Aorta (tissue), 5 donors: ENCODE measurements at regions of chr1 and their contacts with region 1.

Region 1: DNA sequence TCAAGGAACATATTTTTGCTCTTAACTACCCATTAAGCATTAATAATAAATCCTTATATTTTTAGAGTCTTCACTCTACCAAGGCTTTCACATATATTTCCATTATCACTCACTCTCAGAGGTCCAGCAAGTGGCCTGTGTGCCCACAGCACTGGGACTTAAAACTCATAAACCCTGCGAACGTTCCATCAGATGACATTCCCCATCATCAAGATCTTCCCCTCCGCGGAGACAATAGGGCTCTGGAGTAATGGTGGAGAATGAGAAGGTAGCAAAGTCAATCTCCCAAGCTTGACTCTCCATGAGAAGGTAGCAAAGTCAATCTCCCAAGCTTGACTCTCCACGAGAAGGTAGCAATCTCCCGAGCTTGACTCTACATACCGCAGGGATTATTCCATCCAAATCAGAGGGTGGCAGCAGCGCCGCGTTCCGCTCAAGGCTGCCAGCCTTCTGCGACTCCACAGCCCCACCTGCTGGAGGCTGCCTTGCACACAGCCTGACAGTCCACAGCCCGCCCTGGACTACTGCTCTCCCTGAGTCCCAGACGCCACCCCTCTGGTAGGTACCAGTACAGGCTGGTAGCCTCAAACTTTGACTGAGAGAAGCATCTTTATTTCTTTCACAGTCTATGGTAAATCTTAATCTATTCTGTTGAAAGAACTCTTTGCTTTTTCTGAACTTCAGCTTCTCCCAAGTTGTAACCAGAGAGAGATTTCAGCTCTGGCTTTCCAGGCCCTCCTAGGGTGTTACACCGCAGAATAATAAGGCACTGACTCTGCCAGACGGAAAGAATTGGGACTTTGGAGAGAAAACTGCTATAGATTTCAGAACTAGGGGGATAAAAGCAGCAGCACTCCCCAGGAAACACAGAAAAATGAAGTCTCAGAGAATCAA is 26.4 kb upstream of the CTTNBP2NL start:
- DNase-seq: peak; percentile 89 to 97
- ATAC-seq: peak; percentile 97
- H3K4me3 ChIP-seq: no peak overlapping the region
- H3K27ac ChIP-seq: no peak overlapping the region
- H3K4me1 ChIP-seq: no peaks in the 10 kb centered on the region
- H3K27me3 ChIP-seq: no peaks in the 10 kb centered on the region

Region 2: DNA sequence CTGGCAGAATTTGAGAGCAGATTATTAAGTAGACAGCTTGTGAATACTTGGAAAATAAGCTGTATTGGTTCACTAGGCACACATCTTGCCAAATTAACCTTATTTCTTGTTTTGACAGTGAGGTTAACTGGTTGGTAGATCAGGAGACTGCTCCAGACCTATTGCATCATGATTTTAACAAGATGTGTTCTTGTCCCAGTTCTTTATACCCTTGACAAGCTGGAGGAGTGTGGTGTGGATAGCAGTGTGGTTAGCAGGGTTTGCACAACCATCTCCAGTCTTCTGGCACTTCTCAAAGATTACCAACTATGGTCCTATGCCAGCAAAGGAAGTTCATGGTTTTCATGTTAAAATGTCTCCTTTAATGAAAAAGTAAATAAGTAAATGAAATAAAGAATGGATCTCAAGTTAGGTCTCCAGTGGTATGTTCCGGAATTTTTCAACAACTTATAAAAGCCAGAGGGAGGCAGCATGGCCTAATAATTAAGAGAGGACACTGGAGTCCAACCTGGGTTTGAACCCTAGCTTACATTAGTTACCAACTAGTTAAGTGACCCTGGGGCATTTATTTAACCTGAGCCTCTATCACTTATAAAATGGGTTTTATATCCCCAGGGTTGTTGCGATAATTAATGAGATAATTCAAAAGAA is 579.8 kb before region 1 on chr1:
- intact Hi-C with region 1: loop called in 1 of 2 experiments (anchors 10 kb)
- DNase-seq: no peak
- ATAC-seq: no peak
- H3K4me3 ChIP-seq: no peak overlapping the region
- H3K27ac ChIP-seq: no peak overlapping the region
- H3K4me1 ChIP-seq: no peaks in the 10 kb centered on the region
- H3K27me3 ChIP-seq: no peaks in the 10 kb centered on the region

Region 3: GRCh38 chr1:112358798-112359408 is 10.7 kb before region 1 on chr1:
- intact Hi-C with region 1: loop called in 1 of 2 experiments (anchors 1 kb)
- DNase-seq: peak; percentile 82 to 92
- ATAC-seq: peak; percentile 89
- H3K4me3 ChIP-seq: no peak overlapping the region
- H3K27ac ChIP-seq: peak overlapping the region in 1 of 2 donors; percentile 64
- H3K4me1 ChIP-seq: no peaks in the 10 kb centered on the region
- H3K27me3 ChIP-seq: no peaks in the 10 kb centered on the region

Region 4: GRCh38 chr1:112836642-112837041 is 467.0 kb after region 1 on chr1:
- intact Hi-C with region 1: no loop called
- DNase-seq: no peak
- ATAC-seq: no peak
- H3K4me3 ChIP-seq: no peak overlapping the region
- H3K27ac ChIP-seq: no peak overlapping the region
- H3K4me1 ChIP-seq: no peaks in the 10 kb centered on the region
- H3K27me3 ChIP-seq: no peaks in the 10 kb centered on the region